Aorta (tissue), 5 donors: ENCODE measurements at regions of chr19 and their contacts with region 1.

Region 1: DNA sequence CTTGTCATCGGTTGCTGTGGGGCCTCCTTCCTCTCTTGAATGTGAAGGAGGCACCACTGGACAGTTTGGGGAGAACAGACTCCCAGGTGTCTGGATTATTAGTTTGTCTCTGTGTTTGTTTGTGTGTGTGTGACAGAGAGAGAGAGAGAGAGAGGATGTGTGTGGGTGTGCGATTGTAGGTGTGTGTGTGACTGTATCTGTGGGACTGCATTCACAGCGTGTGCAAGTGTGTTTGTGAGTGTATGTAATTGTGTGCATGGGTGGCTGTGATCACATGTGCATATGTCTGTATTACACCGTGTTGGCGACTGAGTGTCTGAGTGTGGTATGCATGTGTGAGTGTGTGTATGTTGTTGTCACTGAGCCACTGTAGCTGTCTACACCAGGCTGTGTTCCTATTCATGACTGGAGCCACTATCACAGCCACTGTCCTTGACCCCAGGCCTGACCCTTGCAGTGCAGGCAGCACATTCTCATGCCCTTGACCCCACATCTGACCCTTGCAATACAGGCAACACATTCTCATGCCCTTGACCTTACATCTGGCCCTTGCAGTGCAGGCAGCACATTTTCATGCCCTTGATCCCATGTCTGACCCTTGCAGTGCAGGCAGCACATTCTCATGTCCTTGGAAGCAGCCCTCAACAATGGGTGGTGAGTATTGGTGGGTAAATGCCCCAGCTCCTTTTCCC is 25.1 kb upstream of the CYP4F8 start:
- DNase-seq: no peak
- ATAC-seq: no peak
- H3K4me3 ChIP-seq: no peak overlapping the region
- H3K27ac ChIP-seq: no peak overlapping the region
- H3K4me1 ChIP-seq: no peaks in the 10 kb centered on the region
- H3K27me3 ChIP-seq: no peaks in the 10 kb centered on the region

Region 2: GRCh38 chr19:16160943-16161560 is 571.1 kb after region 1 on chr19:
- intact Hi-C with region 1: loop called in 1 of 2 experiments (anchors 5 kb)
- DNase-seq: no peak
- ATAC-seq: no peak
- H3K4me3 ChIP-seq: no peak overlapping the region
- H3K27ac ChIP-seq: no peak overlapping the region
- H3K4me1 ChIP-seq: no peaks in the 10 kb centered on the region
- H3K27me3 ChIP-seq: no peaks in the 10 kb centered on the region